Testis (tissue), 5 donors: ENCODE measurements at regions of chr19 and their contacts with region 1.

Region 1: DNA sequence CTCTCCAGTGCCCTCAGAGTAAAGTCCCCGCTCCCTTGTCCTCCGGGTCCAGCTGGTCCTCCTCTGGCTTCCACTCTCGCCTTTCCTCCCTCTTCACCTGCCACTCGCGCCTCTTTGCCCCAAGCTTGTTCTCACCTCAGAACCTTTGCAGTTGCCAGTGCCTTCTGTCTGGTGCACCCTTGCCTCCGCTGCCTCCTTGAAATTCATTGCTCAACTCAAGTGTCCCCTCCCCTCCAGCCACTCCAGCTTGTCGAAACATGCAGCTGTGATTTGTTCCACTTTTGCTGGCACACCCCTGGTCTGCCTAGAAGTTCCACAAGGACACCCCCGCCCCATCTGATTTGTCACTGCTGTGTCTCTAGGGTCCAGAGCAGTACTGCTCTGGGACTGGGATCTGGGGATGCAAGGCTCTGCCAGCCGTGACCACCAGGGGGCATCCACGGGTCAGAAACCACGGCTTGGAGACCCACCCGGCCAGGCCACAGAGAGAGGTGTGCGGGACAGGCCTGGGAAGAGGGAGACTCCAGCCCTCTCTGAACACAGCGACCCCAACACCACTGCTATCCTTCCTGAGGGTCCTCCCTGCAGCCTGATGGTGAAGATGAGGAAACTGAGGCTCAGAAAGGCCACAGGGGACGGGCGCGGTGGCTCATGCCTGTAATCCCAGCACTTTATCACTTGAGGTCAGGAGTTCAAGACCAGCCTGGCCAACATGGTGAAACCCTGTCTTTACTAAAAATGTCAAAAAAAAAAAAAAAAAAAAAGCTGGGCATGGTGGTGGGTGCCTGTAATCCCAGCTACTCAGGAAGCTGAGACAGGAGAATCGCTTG is 49.9 kb downstream of the AP1M1 start:
- DNase-seq: peak; percentile 92
- H3K4me3 ChIP-seq: no peak overlapping the region
- H3K27ac ChIP-seq: no peak overlapping the region
- H3K4me1 ChIP-seq: no peaks in the 10 kb centered on the region
- H3K27me3 ChIP-seq: no peaks in the 10 kb centered on the region
- CTCF ChIP-seq: peak; percentile 88 to 98 (median 93)
- POLR2A ChIP-seq: no peak

Region 2: GRCh38 chr19:15769585-15769984 is 478.0 kb before region 1 on chr19:
- intact Hi-C with region 1: no loop called
- DNase-seq: no peak
- H3K4me3 ChIP-seq: no peak overlapping the region
- H3K27ac ChIP-seq: no peak overlapping the region
- H3K4me1 ChIP-seq: no peaks in the 10 kb centered on the region
- H3K27me3 ChIP-seq: no peaks in the 10 kb centered on the region
- CTCF ChIP-seq: no peak
- POLR2A ChIP-seq: no peak

Region 3: DNA sequence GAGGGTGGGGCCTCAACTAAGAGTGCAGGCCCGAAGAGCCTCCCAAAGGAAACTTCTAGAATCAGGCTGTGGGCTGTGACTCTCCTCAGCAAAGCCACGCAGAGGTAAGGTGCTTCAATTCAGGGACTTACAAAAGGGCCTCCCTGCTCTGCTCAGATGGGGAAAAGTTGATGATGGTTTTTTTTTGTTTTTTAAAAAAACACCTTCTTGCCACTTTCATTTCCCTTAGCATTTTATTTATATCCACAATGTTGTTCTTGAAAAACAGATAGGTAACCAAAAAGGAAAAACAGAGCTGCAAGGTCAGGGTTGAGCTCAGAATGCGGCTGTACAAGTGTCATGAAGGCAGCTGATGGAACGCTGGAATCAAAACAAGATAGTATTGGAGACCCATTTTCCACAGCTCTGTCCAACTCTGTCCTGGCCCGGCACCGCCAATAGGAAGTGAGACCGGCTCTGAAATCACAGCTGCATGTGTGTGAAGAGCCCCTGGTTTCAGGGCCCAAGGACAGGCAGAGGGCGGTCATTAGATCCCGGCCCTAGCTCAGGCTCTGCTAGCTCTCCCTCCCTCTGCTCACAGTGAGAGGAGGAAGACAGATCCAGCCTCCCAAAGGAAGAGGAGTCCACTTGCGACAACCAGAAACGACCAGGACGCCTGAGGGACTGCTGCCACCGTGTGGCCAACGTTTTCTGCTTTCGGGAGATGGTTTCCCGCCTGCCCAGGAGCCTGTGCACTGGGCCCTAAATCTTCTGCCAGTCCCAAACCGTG is 135.4 kb after region 1 on chr19:
- intact Hi-C with region 1: loop called (anchors 5 kb)
- DNase-seq: peak; percentile 92
- H3K4me3 ChIP-seq: no peak overlapping the region
- H3K27ac ChIP-seq: peak overlapping the region; percentile 40 to 88
- H3K4me1 ChIP-seq: peaks cover 16% of the 10 kb centered on the region
- H3K27me3 ChIP-seq: no peaks in the 10 kb centered on the region
- CTCF ChIP-seq: peak; percentile 76 to 89 (median 88)
- POLR2A ChIP-seq: no peak